ENCODE measurements at regions of chr1 and their contacts with region 1.

Region 1: GRCh38 chr1:112722601-112723510 is 7.7 kb upstream of the PPM1J start:
- DNase-seq: peak in 1 of 2 donors; percentile 85
- H3K4me3 ChIP-seq: peak overlapping the region; percentile 23 to 41
- H3K27ac ChIP-seq: peak overlapping the region; percentile 54
- H3K4me1 ChIP-seq: peaks cover 23% of the 10 kb centered on the region
- H3K27me3 ChIP-seq: no peaks in the 10 kb centered on the region
- CTCF ChIP-seq: no peak
- POLR2A ChIP-seq: no peak

Region 2: GRCh38 chr1:113042285-113043143 is 319.7 kb after region 1 on chr1:
- intact Hi-C with region 1: loop called (anchors 10 kb)
- DNase-seq: no peak
- H3K4me3 ChIP-seq: no peak overlapping the region
- H3K27ac ChIP-seq: no peak overlapping the region
- H3K4me1 ChIP-seq: peaks cover 13% of the 10 kb centered on the region
- H3K27me3 ChIP-seq: no peaks in the 10 kb centered on the region
- CTCF ChIP-seq: peak; percentile 33 to 62 (median 59)
- POLR2A ChIP-seq: no peak

Measured in vagina (tissue), 2 donors.